ENCODE measurements at regions of chr3 and their contacts with region 1.

Region 1: DNA sequence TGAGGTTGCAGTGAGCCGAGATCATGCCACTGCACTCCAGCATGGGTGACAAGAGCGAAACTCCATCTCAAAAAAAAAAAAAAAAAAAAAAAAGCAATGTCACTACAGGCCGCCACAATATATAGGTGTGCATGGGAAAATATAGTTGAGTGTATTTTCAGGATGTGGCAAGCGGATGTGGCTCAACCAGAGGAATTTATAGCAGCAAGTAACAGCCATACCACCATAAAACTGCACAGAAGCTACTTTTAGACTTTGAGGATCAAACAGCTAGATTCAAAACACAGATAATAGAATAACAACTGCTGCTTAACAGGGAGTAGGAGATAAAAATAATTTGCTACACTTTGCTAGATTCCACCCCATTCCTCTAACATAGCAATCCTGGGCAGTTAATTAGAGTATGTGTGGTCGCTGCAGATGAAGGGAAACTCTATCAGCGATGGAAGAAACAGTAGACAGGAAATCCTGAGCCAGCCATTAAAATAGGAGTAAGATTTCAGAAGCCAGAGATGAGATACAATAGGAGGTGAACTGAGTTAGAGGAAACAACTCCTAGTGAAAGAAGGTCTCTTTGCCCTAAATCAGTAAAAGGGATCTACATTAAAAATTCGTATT is 318.7 kb upstream of the STT3B start:
- DNase-seq: peak in 5 of 9 experiments; percentile 15 to 70 (median 34)
- ATAC-seq: peak; percentile 55
- H3K4me3 ChIP-seq: no peak overlapping the region
- H3K4me3 Mint-ChIP-seq: peak overlapping the region; percentile 74
- H3K27ac ChIP-seq: no peak overlapping the region
- H3K27ac Mint-ChIP-seq: peak overlapping the region; percentile 78
- H3K4me1 ChIP-seq: peaks cover 43% of the 10 kb centered on the region
- H3K4me1 Mint-ChIP-seq: peaks cover 86% of the 10 kb centered on the region
- H3K27me3 ChIP-seq: no peaks in the 10 kb centered on the region
- H3K27me3 Mint-ChIP-seq: no peaks in the 10 kb centered on the region
- CTCF ChIP-seq: no peak

Region 2: DNA sequence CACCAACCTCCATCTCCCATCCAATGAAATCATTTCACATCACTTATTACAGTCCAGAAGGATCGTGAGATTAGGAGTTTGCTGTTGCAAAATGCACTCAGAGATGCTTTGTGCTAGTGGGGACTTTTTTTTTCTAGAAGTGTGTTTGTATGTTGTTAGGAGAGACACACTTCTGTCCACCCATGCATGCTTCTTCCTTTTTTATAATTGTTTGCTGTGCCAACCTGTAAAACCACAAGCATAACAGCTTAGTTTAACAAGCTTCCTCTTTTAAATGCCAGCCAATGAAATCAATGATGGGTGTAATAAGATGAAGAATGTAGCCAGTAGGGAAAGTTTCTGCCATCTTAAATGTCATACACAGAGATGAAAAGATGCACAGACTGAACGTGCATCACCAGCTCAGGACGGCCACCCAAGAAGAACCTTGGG is 13.2 kb after region 1 on chr3:
- CTCF ChIA-PET with region 1: interaction called, 8 read pairs
- POLR2A ChIA-PET with region 1: interaction called, 24 read pairs
- intact Hi-C with region 1: loop called in 1 of 2 experiments (anchors 1 kb)
- DNase-seq: peak in 2 of 9 experiments; percentile 65 to 81
- ATAC-seq: peak; percentile 79
- H3K4me3 ChIP-seq: no peak overlapping the region
- H3K4me3 Mint-ChIP-seq: peak overlapping the region; percentile 35
- H3K27ac ChIP-seq: peak overlapping the region; percentile 52 to 76
- H3K27ac Mint-ChIP-seq: peak overlapping the region; percentile 91
- H3K4me1 ChIP-seq: peaks cover 88% of the 10 kb centered on the region
- H3K4me1 Mint-ChIP-seq: peaks cover 86% of the 10 kb centered on the region
- H3K27me3 ChIP-seq: no peaks in the 10 kb centered on the region
- H3K27me3 Mint-ChIP-seq: no peaks in the 10 kb centered on the region
- CTCF ChIP-seq: no peak

Region 3: GRCh38 chr3:31247850-31248562 is 34.0 kb after region 1 on chr3:
- CTCF ChIA-PET with region 1: no interaction called
- POLR2A ChIA-PET with region 1: no interaction called
- intact Hi-C with region 1: loop called in 1 of 2 experiments (anchors 5 kb)
- DNase-seq: no peak
- ATAC-seq: no peak
- H3K4me3 ChIP-seq: no peak overlapping the region
- H3K4me3 Mint-ChIP-seq: no peak overlapping the region
- H3K27ac ChIP-seq: no peak overlapping the region
- H3K27ac Mint-ChIP-seq: no peak overlapping the region
- H3K4me1 ChIP-seq: no peaks in the 10 kb centered on the region
- H3K4me1 Mint-ChIP-seq: peaks cover 7% of the 10 kb centered on the region
- H3K27me3 ChIP-seq: no peaks in the 10 kb centered on the region
- H3K27me3 Mint-ChIP-seq: no peaks in the 10 kb centered on the region
- CTCF ChIP-seq: no peak

Measured in CD8-positive, alpha-beta T cell (primary cell).